ENCODE measurements at regions of chr3 and their contacts with region 1.

Region 1: DNA sequence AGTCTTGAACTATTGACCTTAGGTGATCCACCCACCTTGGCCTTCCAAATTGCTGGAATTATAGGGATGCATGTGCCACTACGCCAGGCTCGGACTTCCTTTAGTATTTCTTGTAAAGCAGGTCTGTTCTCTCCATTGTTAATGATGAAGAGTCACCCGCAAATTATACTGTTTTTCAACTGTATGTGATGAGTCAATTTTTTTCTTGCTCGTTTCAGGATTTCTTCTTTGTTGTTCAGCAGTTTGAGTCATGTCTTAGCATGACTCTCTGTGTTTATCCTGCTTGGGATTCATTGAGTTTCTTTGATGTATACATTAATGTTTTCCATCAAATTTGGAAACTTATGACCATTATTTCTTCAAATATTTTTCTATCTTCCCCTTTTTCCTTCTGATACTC is 28.9 kb downstream of the GRAMD1C start:
- DNase-seq: peak; percentile 38
- H3K4me3 Mint-ChIP-seq: no peak overlapping the region
- H3K27ac Mint-ChIP-seq: peak overlapping the region; percentile 0
- H3K4me1 Mint-ChIP-seq: peaks cover 6% of the 10 kb centered on the region
- H3K27me3 Mint-ChIP-seq: no peaks in the 10 kb centered on the region
- CTCF ChIP-seq: no peak

Region 2: GRCh38 chr3:113795693-113796092 is 71.8 kb before region 1 on chr3:
- CTCF ChIA-PET with region 1: no interaction called
- POLR2A ChIA-PET with region 1: no interaction called
- intact Hi-C with region 1: no loop called
- DNase-seq: no peak
- H3K4me3 Mint-ChIP-seq: no peak overlapping the region
- H3K27ac Mint-ChIP-seq: no peak overlapping the region
- H3K4me1 Mint-ChIP-seq: no peaks in the 10 kb centered on the region
- H3K27me3 Mint-ChIP-seq: no peaks in the 10 kb centered on the region
- CTCF ChIP-seq: no peak

Region 3: GRCh38 chr3:113927556-113927955 is 60.0 kb after region 1 on chr3:
- CTCF ChIA-PET with region 1: no interaction called
- POLR2A ChIA-PET with region 1: no interaction called
- intact Hi-C with region 1: no loop called
- DNase-seq: no peak
- H3K4me3 Mint-ChIP-seq: no peak overlapping the region
- H3K27ac Mint-ChIP-seq: no peak overlapping the region
- H3K4me1 Mint-ChIP-seq: no peaks in the 10 kb centered on the region
- H3K27me3 Mint-ChIP-seq: no peaks in the 10 kb centered on the region
- CTCF ChIP-seq: no peak

Region 4: GRCh38 chr3:114756506-114757279 is 889.2 kb after region 1 on chr3:
- CTCF ChIA-PET with region 1: interaction called, 3 read pairs
- POLR2A ChIA-PET with region 1: no interaction called
- intact Hi-C with region 1: loop called (anchors 10 kb)
- DNase-seq: no peak
- H3K4me3 Mint-ChIP-seq: no peak overlapping the region
- H3K27ac Mint-ChIP-seq: no peak overlapping the region
- H3K4me1 Mint-ChIP-seq: peaks cover 11% of the 10 kb centered on the region
- H3K27me3 Mint-ChIP-seq: no peaks in the 10 kb centered on the region
- CTCF ChIP-seq: no peak

Measured in MCF 10A (cell line).